HepG2 (cell line): ENCODE measurements at regions of chr2 and their contacts with region 1.

Region 1: GRCh38 chr2:127884436-127885345 is 1.1 kb downstream of the AMMECR1L start:
- DNase-seq: no peak
- ATAC-seq: no peak
- H3K4me3 ChIP-seq: peak overlapping the region; percentile 62 to 75 (median 68)
- H3K27ac ChIP-seq: peak overlapping the region; percentile 5
- H3K4me1 ChIP-seq: peaks cover 58% of the 10 kb centered on the region
- H3K27me3 ChIP-seq: no peaks in the 10 kb centered on the region; a peak in 1 of 5 replicates
- CTCF ChIP-seq: 0 out of 2 replicates have a peak, but pooled peaks have one; percentile 14
- EP300 ChIP-seq: no peak
- POLR2A ChIP-seq: no peak
- RAD21 ChIP-seq: no peak

Region 2: DNA sequence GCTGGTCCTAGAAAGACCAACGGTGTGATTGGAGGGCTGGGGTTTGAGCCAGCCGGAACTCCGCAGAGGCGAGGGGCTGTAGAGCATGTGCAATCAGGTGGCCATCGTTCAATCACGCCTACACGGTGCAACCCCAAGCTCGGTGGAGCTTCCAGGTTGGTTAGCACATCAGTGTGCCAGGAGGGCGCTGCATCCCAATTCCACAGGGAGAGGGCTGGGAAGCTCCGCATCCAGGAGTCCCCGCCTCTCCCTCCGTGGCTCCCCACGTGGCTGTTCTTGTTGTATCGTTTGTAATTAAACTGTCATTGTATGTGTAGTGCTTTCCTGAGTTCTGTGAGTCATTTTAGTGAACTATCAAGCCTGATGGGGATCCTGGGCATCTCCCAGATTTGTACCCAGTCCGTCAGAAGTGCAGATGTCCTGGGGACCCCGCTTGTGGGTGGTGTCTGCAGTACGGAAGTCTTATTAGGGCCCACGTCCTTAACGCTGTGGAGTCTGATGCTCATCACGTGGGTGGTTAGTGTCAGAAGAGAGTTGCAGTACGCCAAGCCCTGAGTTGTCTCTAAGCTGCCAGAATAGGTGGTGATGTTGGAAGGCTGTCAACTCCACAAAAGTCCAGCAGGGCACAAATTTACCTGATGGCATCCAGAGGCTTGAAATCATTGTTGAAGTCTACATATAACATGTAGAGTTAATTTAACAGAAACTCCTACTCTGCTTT is 21.7 kb after region 1 on chr2:
- CTCF ChIA-PET with region 1: no interaction called
- POLR2A ChIA-PET with region 1: no interaction called
- in situ Hi-C with region 1: no loop called
- intact Hi-C with region 1: loop called (anchors 2 kb)
- DNase-seq: no peak
- ATAC-seq: peak; percentile 74
- H3K4me3 ChIP-seq: peak overlapping the region in 2 of 3 experiments; percentile 14 to 41; a peak in 2 of 6 replicates
- H3K27ac ChIP-seq: no peak overlapping the region
- H3K4me1 ChIP-seq: peaks cover 27% of the 10 kb centered on the region
- H3K27me3 ChIP-seq: peaks cover 0 to 23% of the 10 kb centered on the region in 2 experiments; a peak in 4 of 5 replicates
- CTCF ChIP-seq: peak; percentile 35
- EP300 ChIP-seq: no peak
- POLR2A ChIP-seq: no peak
- RAD21 ChIP-seq: no peak

Region 3: GRCh38 chr2:127968610-127969339 is 84.1 kb after region 1 on chr2:
- CTCF ChIA-PET with region 1: no interaction called
- POLR2A ChIA-PET with region 1: no interaction called
- in situ Hi-C with region 1: no loop called
- intact Hi-C with region 1: loop called (anchors 10 kb)
- DNase-seq: no peak
- ATAC-seq: no peak
- H3K4me3 ChIP-seq: no peak overlapping the region
- H3K27ac ChIP-seq: no peak overlapping the region
- H3K4me1 ChIP-seq: no peaks in the 10 kb centered on the region
- H3K27me3 ChIP-seq: no peaks in the 10 kb centered on the region
- CTCF ChIP-seq: no peak
- EP300 ChIP-seq: no peak
- POLR2A ChIP-seq: no peak
- RAD21 ChIP-seq: no peak